Activated CD8-positive, alpha-beta T cell treated with anti-CD3 and anti-CD28 coated beads for 36 hours (primary cell): ENCODE measurements at regions of chr9 and their contacts with region 1.

Region 1: GRCh38 chr9:92790542-92791527 is 26.2 kb upstream of the BICD2 start:
- DNase-seq: peak; percentile 88
- ATAC-seq: peak; percentile 95
- H3K4me3 Mint-ChIP-seq: no peak overlapping the region
- H3K27ac Mint-ChIP-seq: no peak overlapping the region
- H3K4me1 Mint-ChIP-seq: peaks cover 6% of the 10 kb centered on the region
- H3K27me3 Mint-ChIP-seq: peaks cover under 1% of the 10 kb centered on the region
- CTCF ChIP-seq: peak; percentile 91

Region 2: DNA sequence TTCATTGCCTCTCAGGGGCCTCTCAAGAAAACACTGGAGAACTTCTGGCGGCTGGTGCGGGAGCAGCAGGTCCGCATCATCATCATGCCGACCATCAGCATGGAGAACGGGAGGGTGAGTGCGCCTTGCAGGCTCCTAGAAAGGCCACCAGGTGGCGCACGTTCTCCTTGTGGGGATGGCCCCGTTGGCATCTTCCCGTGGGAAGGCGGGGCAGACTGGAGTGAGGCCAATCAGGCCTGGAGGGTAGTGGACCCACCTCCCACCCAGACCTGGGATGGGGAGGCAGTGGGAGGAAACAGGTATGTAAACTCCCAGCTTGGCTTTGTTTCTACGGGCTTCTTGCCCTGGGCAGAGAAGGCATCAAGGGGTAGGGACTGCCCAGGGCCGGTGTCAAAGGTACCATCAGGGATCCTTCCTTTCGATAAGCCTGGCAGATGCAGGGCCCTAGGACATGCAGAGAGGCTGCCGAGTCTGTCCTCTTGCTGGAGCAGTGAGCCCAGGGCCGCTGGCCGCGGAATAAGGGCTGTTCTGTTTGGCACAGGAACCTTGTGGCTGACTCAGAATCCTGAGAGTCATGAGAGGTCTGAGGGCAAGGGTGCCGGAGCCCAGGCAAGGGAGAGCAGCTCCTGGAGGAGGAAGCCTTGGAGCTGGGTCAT is 656.8 kb before region 1 on chr9:
- CTCF ChIA-PET with region 1: interaction called, 15 read pairs
- POLR2A ChIA-PET with region 1: no interaction called
- intact Hi-C with region 1: loop called (anchors 10 kb)
- DNase-seq: peak; percentile 84
- ATAC-seq: peak; percentile 88
- H3K4me3 Mint-ChIP-seq: no peak overlapping the region
- H3K27ac Mint-ChIP-seq: no peak overlapping the region
- H3K4me1 Mint-ChIP-seq: peaks cover 6% of the 10 kb centered on the region
- H3K27me3 Mint-ChIP-seq: peaks cover 27% of the 10 kb centered on the region
- CTCF ChIP-seq: peak; percentile 94

Region 3: DNA sequence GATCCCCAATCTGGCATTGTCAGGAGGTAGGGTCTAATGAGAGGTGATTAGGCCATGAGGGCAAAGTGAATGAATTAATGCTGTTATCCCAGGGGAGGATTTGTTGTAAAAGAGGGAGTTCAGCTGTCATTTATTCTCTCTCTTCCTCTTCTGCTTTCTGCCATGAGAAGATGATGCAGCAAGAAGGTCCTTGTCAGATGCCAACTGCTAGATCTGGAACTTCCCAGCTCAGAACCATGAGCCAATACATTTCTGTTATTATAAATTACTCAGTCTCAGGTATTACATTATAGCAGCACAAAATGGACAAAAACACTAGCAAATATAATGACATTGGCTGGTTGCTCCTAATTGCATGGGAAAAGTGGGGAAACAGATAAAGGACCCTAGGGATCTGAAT is 10.6 kb before region 1 on chr9:
- CTCF ChIA-PET with region 1: interaction called, 12 read pairs
- POLR2A ChIA-PET with region 1: no interaction called
- intact Hi-C with region 1: no loop called
- DNase-seq: no peak
- ATAC-seq: no peak
- H3K4me3 Mint-ChIP-seq: no peak overlapping the region
- H3K27ac Mint-ChIP-seq: no peak overlapping the region
- H3K4me1 Mint-ChIP-seq: no peaks in the 10 kb centered on the region
- H3K27me3 Mint-ChIP-seq: peaks cover 3% of the 10 kb centered on the region
- CTCF ChIP-seq: no peak